ENCODE measurements at regions of chr19 and their contacts with region 1.

Region 1: GRCh38 chr19:42423462-42424344 is 3.5 kb downstream of the LIPE start:
- DNase-seq: peak; percentile 88 to 96 (median 92)
- ATAC-seq: peak; percentile 84
- H3K4me3 ChIP-seq: peak overlapping the region; percentile 80
- H3K4me3 Mint-ChIP-seq: peak overlapping the region; percentile 92
- H3K27ac ChIP-seq: peak overlapping the region; percentile 63 to 80
- H3K27ac Mint-ChIP-seq: peak overlapping the region; percentile 78
- H3K4me1 ChIP-seq: peaks cover 46% of the 10 kb centered on the region
- H3K4me1 Mint-ChIP-seq: peaks cover 49% of the 10 kb centered on the region
- H3K27me3 ChIP-seq: no peaks in the 10 kb centered on the region
- H3K27me3 Mint-ChIP-seq: no peaks in the 10 kb centered on the region
- CTCF ChIP-seq: no peak

Region 2: DNA sequence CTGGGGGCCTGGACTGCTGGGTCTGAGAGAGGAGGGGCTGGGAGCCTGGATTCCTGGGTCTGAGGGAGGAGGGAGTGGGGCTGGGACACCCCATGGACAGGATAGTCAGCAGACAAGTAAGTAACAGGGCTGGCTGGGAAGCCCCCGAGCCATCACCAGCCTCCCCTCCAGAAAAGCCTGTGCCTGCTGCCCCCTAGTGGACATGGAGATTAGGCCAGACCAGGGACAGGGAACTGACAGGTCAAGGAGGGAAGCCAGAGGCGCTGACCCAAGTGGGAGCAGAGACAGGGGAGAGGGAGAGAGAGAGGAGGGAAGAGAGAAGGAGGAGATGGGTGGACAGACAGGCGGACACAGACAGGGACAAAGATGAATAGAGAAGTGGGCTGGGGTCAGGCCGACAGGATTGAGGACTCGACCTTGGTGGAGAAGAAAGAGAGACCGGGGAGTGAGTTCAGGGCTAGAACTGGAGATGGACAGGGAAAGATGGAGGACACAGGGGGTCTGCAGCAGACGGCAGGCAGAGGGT is 488.8 kb before region 1 on chr19:
- CTCF ChIA-PET with region 1: no interaction called
- POLR2A ChIA-PET with region 1: no interaction called
- intact Hi-C with region 1: no loop called
- DNase-seq: peak; percentile 65 to 88 (median 74)
- ATAC-seq: peak; percentile 63
- H3K4me3 ChIP-seq: no peak overlapping the region
- H3K4me3 Mint-ChIP-seq: peak overlapping the region; percentile 40
- H3K27ac ChIP-seq: no peak overlapping the region
- H3K27ac Mint-ChIP-seq: peak overlapping the region; percentile 73
- H3K4me1 ChIP-seq: peaks cover 49% of the 10 kb centered on the region
- H3K4me1 Mint-ChIP-seq: peaks cover 56% of the 10 kb centered on the region
- H3K27me3 ChIP-seq: no peaks in the 10 kb centered on the region
- H3K27me3 Mint-ChIP-seq: no peaks in the 10 kb centered on the region
- CTCF ChIP-seq: peak; percentile 96

Region 3: GRCh38 chr19:42283143-42284065 is 140.3 kb before region 1 on chr19:
- CTCF ChIA-PET with region 1: no interaction called
- POLR2A ChIA-PET with region 1: no interaction called
- intact Hi-C with region 1: loop called in 1 of 2 experiments (anchors 10 kb)
- DNase-seq: peak; percentile 92 to 99 (median 97)
- ATAC-seq: peak; percentile 62
- H3K4me3 ChIP-seq: peak overlapping the region; percentile 55
- H3K4me3 Mint-ChIP-seq: no peak overlapping the region
- H3K27ac ChIP-seq: peak overlapping the region; percentile 86 to 88
- H3K27ac Mint-ChIP-seq: no peak overlapping the region
- H3K4me1 ChIP-seq: peaks cover 71% of the 10 kb centered on the region
- H3K4me1 Mint-ChIP-seq: peaks cover 43% of the 10 kb centered on the region
- H3K27me3 ChIP-seq: no peaks in the 10 kb centered on the region
- H3K27me3 Mint-ChIP-seq: no peaks in the 10 kb centered on the region
- CTCF ChIP-seq: no peak

Region 4: DNA sequence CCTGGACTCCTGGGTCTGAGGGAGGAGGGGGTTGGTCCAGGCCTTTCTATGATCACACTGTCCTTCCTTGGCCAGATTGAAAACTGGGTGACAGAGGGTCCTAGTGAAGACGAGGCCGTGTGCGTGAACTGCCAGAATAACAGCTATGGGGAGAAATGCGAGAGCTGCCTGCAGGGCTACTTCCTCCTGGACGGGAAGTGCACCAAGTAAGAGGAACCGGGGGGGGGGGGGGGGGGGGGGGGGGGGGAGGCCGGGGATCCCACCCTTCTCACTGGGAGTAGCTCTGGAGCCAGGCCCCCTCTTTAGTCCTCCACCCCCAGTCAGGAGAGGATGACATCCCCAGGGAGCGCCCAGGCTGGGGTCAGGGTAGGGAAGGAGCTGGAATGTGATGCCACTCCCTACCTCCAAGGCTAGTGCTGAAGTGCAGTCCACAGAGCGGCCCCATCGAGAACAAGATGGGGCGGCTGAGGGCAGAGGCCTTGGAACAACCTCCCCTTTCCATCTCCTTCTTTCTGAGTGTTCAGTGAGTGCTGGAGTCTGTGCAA is 53.0 kb before region 1 on chr19:
- CTCF ChIA-PET with region 1: no interaction called
- POLR2A ChIA-PET with region 1: no interaction called
- intact Hi-C with region 1: no loop called
- DNase-seq: no peak
- ATAC-seq: no peak
- H3K4me3 ChIP-seq: no peak overlapping the region
- H3K4me3 Mint-ChIP-seq: no peak overlapping the region
- H3K27ac ChIP-seq: no peak overlapping the region
- H3K27ac Mint-ChIP-seq: no peak overlapping the region
- H3K4me1 ChIP-seq: no peaks in the 10 kb centered on the region
- H3K4me1 Mint-ChIP-seq: no peaks in the 10 kb centered on the region
- H3K27me3 ChIP-seq: no peaks in the 10 kb centered on the region
- H3K27me3 Mint-ChIP-seq: no peaks in the 10 kb centered on the region
- CTCF ChIP-seq: no peak

Region 5: GRCh38 chr19:42386974-42387707 is 36.6 kb before region 1 on chr19:
- CTCF ChIA-PET with region 1: no interaction called
- POLR2A ChIA-PET with region 1: no interaction called
- intact Hi-C with region 1: loop called in 1 of 2 experiments (anchors 5 kb)
- DNase-seq: peak; percentile 48 to 79 (median 63)
- ATAC-seq: peak; percentile 95
- H3K4me3 ChIP-seq: peak overlapping the region; percentile 28
- H3K4me3 Mint-ChIP-seq: peak overlapping the region; percentile 22
- H3K27ac ChIP-seq: no peak overlapping the region
- H3K27ac Mint-ChIP-seq: no peak overlapping the region
- H3K4me1 ChIP-seq: peaks cover 9% of the 10 kb centered on the region
- H3K4me1 Mint-ChIP-seq: peaks cover 7% of the 10 kb centered on the region
- H3K27me3 ChIP-seq: peaks cover 21 to 28% of the 10 kb centered on the region in 2 experiments
- H3K27me3 Mint-ChIP-seq: peaks cover 54% of the 10 kb centered on the region
- CTCF ChIP-seq: peak; percentile 55

Region 6: DNA sequence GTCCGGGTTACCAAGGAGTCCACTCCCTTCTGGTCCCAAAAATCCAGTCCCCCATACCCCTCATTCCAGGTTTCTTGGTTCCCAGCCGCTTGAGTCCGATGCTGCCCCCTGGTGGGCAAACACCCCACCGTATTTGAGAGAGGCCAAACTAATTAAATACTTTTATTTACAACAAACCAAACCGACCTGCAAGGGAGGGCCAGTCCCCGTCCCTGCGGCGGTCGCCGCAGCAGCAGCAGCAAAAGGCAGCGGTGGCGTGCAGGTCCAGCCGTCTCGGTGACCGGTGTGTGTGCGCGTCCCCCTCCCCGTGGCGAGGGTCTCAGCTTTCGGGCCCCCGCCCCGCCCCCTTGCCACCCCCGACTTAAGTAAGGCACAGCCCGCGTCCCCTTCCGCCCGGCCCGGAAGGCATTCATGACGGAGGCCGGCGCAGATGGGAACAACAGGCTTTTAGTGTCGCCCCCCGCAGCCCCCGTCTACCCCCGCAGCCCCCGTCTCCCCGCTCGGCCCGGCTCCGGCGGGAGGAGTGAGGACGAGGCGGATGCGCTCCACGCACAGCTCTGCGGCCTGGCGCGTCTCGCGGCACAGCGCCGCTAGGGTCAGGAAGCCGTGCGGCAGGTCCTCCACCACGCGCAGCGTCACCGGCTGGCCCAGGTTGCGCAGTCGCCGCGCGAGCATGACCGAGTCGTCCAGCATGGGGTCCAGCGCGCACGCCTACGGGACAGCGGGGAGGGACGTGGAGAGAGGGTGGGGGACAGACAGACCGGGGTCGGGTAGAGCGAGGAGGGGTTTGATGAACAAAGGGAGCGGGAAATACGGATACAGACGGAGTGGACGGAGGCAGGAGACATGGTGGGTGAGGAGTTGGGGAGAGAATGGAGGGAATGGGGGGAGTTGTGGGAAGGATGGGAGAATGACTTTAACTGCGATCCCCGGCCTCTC is 22.1 kb before region 1 on chr19:
- CTCF ChIA-PET with region 1: interaction called, 16 read pairs
- POLR2A ChIA-PET with region 1: interaction called, 10 read pairs
- intact Hi-C with region 1: loop called in 1 of 2 experiments (anchors 2 kb)
- DNase-seq: peak; percentile 63 to 90 (median 70)
- ATAC-seq: peak; percentile 68
- H3K4me3 ChIP-seq: peak overlapping the region; percentile 56
- H3K4me3 Mint-ChIP-seq: peak overlapping the region; percentile 90
- H3K27ac ChIP-seq: peak overlapping the region in 1 of 2 donors; percentile 40
- H3K27ac Mint-ChIP-seq: peak overlapping the region; percentile 75
- H3K4me1 ChIP-seq: peaks cover 37% of the 10 kb centered on the region
- H3K4me1 Mint-ChIP-seq: peaks cover 46% of the 10 kb centered on the region
- H3K27me3 ChIP-seq: no peaks in the 10 kb centered on the region
- H3K27me3 Mint-ChIP-seq: no peaks in the 10 kb centered on the region
- CTCF ChIP-seq: peak; percentile 77

Region 7: DNA sequence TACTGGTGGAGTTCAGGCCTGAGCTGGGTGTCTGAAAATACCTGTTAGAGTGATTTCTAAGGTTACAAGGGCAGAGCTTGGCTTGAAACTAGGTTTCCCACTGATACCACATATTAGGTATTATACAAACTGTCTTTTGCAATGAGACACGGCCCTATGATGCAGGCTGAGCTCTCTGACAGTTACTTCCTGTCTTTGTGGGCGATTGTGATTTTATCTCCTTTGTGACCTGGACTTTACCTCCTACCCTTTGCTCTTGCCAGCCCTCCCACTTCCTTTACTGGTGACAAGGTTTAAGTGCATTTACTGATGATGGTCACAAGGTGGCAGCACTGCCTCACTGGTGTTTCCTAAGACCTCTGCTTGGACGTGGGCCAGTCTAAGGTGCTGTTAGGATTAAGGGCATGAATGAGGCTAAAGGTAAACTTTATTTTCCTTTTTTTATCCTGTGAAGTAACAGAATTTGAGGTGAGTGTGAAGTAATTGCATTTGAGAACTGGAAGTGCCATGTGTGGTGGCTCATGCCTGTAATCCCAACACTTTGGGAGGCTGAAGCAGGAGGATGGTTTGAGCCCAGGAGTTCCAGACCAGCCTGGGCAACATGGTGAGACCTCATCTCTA is 26.7 kb after region 1 on chr19:
- CTCF ChIA-PET with region 1: interaction called, 9 read pairs
- POLR2A ChIA-PET with region 1: interaction called, 11 read pairs
- intact Hi-C with region 1: no loop called
- DNase-seq: peak; percentile 61 to 96 (median 74)
- ATAC-seq: peak; percentile 97
- H3K4me3 ChIP-seq: no peak overlapping the region
- H3K4me3 Mint-ChIP-seq: no peak overlapping the region
- H3K27ac ChIP-seq: peak overlapping the region; percentile 68 to 81
- H3K27ac Mint-ChIP-seq: no peak overlapping the region
- H3K4me1 ChIP-seq: peaks cover 22% of the 10 kb centered on the region
- H3K4me1 Mint-ChIP-seq: no peaks in the 10 kb centered on the region
- H3K27me3 ChIP-seq: no peaks in the 10 kb centered on the region
- H3K27me3 Mint-ChIP-seq: no peaks in the 10 kb centered on the region
- CTCF ChIP-seq: peak; percentile 83

Region 8: DNA sequence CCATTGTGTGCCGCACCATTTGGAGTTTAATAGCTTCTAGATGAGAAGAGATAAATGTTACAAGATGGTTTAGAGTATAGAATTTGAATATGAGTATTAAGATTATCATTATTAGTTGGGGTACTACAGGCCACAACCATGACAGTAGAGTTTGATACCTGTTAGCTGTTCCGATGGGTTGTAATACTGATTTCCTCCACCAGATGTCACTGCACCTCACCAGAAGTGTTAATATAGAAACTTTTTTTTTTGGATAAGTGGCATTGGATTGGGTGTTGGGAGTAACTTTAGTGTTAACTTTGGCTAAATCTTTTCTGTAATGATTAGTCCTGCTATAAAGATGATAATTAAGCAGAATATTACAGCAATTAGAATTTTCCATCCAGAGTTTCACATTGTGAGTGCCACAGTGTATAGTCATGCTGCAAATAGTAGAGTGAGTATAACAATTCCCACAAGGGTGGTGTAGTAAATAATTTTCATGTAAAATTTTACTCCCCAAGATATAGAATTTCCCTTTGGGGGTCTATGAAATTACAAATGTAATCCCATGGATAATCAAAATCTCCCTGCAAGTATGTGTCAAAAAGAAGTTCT is 260.3 kb after region 1 on chr19:
- CTCF ChIA-PET with region 1: no interaction called
- POLR2A ChIA-PET with region 1: no interaction called
- intact Hi-C with region 1: no loop called
- DNase-seq: peak in 2 of 14 experiments; percentile 18 to 31
- ATAC-seq: no peak
- H3K4me3 ChIP-seq: no peak overlapping the region
- H3K4me3 Mint-ChIP-seq: no peak overlapping the region
- H3K27ac ChIP-seq: no peak overlapping the region
- H3K27ac Mint-ChIP-seq: no peak overlapping the region
- H3K4me1 ChIP-seq: no peaks in the 10 kb centered on the region
- H3K4me1 Mint-ChIP-seq: no peaks in the 10 kb centered on the region
- H3K27me3 ChIP-seq: peaks cover 0 to 4% of the 10 kb centered on the region in 2 experiments
- H3K27me3 Mint-ChIP-seq: peaks cover 13% of the 10 kb centered on the region
- CTCF ChIP-seq: peak; percentile 63